ENCODE measurements at regions of chr1 and their contacts with region 1.

Region 1: DNA sequence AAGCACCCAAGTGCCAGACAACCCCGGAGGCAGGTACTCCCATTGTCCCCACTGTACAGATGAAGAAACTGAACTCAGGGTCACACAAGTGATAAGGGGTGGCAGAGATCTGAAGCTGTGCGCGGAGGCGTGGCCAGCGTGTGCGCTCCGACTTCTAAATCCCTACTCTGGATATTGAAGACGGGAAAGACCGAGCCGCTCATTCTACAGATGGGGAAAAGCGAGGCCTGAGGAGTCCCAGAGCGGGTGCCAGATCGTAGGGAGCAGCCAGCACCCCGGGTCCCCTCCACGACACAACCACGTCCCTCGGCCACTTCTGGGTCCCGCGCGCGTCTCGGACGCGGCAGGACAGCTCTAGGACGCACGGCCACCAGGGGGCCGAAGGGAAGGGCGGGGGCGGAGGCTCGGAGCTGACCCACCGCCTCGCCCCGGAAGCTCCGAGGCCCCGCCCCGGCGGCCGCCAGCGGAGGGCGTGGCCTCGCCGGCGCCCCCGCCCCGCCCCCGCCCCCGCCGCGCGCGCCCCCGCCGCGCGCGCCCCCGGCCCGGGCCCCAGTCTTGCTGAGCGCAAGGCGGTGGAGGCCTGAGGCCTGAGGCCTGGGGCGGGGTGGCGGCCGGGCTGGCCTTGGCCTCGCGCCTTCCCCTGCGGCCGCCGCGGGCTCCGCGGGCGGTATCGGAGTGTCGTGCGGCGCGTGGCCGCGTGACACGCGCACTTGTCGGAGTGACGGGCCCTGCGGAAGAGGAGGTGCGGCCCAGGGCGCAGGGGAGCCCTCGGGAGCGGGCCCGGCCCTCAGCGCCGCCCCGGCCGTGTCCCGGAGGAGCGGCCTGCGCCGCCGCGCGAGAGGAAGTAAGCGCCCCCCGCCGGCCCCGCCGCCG is at the start of gene H6PD:
- DNase-seq: no peak
- ATAC-seq: peak; percentile 86
- H3K4me3 ChIP-seq: peak within 1 kb of the TSS; percentile 98
- H3K27ac ChIP-seq: peak within 1 kb of the TSS; percentile 93
- H3K4me1 ChIP-seq: peaks cover 18% of the 10 kb centered on the region
- H3K27me3 ChIP-seq: no peaks in the 10 kb centered on the region
- CTCF ChIP-seq: peak; percentile 47 to 74 (median 73)
- EP300 ChIP-seq: no peak
- POLR2A ChIP-seq: peak; percentile 92
- RAD21 ChIP-seq: no peak
- polyA plus RNA-seq, gene H6PD: 1.2 to 1.4 TPM

Region 2: DNA sequence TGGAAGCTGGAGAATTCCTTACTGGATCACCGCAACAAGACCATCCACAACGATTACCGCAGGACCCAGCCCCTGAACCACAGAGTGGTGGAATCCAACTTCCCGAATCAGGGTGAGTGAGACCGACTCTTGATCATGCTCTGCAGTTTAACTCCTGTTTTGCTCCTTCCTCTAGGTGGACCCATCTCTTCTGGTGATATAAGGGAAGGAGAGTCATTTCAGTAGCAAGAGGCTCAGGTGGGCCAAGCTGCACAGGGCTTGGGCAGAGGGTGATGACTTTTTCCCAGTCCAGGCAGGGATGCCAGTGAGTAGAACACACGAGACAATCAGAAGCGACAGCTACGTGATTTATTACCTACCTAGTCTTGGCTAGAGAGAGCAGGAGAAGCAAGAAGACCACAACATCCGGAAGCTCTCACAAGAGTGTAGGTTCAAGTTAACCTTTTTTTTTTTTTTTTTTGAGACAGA is 263.6 kb before region 1 on chr1:
- CTCF ChIA-PET with region 1: no interaction called
- POLR2A ChIA-PET with region 1: no interaction called
- RAD21 ChIA-PET with region 1: no interaction called
- SMC1A ChIA-PET with region 1: no interaction called
- in situ Hi-C with region 1: no loop called
- intact Hi-C with region 1: no loop called
- DNase-seq: peak; percentile 11
- ATAC-seq: peak; percentile 60
- H3K4me3 ChIP-seq: no peak overlapping the region
- H3K27ac ChIP-seq: no peak overlapping the region
- H3K4me1 ChIP-seq: peaks cover 3% of the 10 kb centered on the region
- H3K27me3 ChIP-seq: no peaks in the 10 kb centered on the region
- CTCF ChIP-seq: no peak
- EP300 ChIP-seq: no peak
- POLR2A ChIP-seq: no peak
- RAD21 ChIP-seq: no peak

Region 3: DNA sequence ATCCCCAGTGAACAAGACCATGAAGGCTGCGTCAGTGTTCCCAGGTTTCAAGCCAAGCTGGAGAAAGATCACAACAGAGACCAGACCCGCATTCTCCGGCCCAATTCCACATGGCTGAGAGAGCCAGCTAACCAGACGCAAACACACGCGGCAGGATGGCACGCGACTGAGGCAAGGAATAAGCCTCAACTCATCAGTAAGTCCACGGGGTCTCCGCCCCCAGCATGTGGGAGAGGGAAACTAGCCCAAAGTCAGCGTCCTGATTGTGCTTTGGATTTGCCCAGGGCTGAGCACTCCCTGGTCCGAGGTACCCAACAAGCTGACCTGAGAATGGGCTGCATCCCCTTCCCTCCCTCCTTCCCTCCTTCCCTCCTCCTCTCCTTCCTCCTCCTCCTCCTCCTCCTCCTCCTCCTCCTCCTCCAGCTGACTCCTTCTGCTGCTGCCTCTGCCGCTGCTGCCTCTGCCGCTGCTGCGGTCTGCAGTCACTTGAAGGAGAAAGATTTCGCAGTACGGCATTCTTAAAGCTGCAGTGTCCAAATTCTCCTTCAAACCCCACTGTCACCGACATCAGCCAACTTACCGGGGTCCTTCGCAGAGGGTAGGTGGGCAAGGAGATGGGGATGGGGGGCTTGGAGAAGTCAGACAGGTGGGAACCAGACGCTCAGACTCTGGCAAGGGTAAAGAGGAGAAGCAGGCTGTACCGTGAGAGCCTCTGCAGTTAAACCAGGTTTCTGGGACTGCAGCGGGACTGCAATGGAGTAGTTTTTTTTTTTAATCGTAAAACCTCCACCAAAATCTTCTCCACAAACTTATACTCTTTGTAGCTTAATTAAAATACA is 32.8 kb before region 1 on chr1:
- CTCF ChIA-PET with region 1: interaction called, 7 read pairs
- POLR2A ChIA-PET with region 1: interaction called, 6 read pairs
- RAD21 ChIA-PET with region 1: interaction called, 4 read pairs
- SMC1A ChIA-PET with region 1: interaction called, 16 read pairs
- in situ Hi-C with region 1: no loop called
- intact Hi-C with region 1: loop called (anchors 2 kb)
- DNase-seq: no peak
- ATAC-seq: peak; percentile 37
- H3K4me3 ChIP-seq: peak overlapping the region; percentile 20; the same call in 1 of the 2 replicates
- H3K27ac ChIP-seq: no peak overlapping the region
- H3K4me1 ChIP-seq: peaks cover 48% of the 10 kb centered on the region
- H3K27me3 ChIP-seq: peaks cover 0 to 32% of the 10 kb centered on the region in 2 experiments; a peak in 3 of 4 replicates
- CTCF ChIP-seq: no peak
- EP300 ChIP-seq: no peak
- POLR2A ChIP-seq: no peak
- RAD21 ChIP-seq: no peak

Region 4: GRCh38 chr1:9448132-9449105 is 214.0 kb after region 1 on chr1:
- CTCF ChIA-PET with region 1: no interaction called
- POLR2A ChIA-PET with region 1: interaction called, 11 read pairs
- RAD21 ChIA-PET with region 1: no interaction called
- SMC1A ChIA-PET with region 1: no interaction called
- in situ Hi-C with region 1: no loop called
- intact Hi-C with region 1: no loop called
- DNase-seq: no peak
- ATAC-seq: no peak
- H3K4me3 ChIP-seq: no peak overlapping the region
- H3K27ac ChIP-seq: no peak overlapping the region
- H3K4me1 ChIP-seq: 0 out of 2 replicates have a peak, but pooled peaks cover 3% of the 10 kb centered on the region
- H3K27me3 ChIP-seq: no peaks in the 10 kb centered on the region
- CTCF ChIP-seq: peak in 1 of 3 experiments; percentile 9; a peak in 1 of 6 replicates
- EP300 ChIP-seq: no peak
- POLR2A ChIP-seq: no peak
- RAD21 ChIP-seq: no peak